ENCODE measurements at regions of chr11 and their contacts with region 1.

Region 1: GRCh38 chr11:75721855-75722668 is 4.4 kb downstream of the MOGAT2 start:
- DNase-seq: no peak
- H3K4me3 ChIP-seq: no peak overlapping the region
- H3K27ac ChIP-seq: peak overlapping the region in 1 of 59 donors; percentile 17
- H3K27me3 ChIP-seq: no peaks in the 10 kb centered on the region
- CTCF ChIP-seq: no peak

Region 2: GRCh38 chr11:75603791-75604736 is 118.0 kb before region 1 on chr11:
- intact Hi-C with region 1: no loop called
- DNase-seq: no peak
- H3K4me3 ChIP-seq: no peak overlapping the region
- H3K27ac ChIP-seq: no peak overlapping the region
- H3K27me3 ChIP-seq: no peaks in the 10 kb centered on the region
- CTCF ChIP-seq: no peak

Region 3: GRCh38 chr11:75826461-75827230 is 104.6 kb after region 1 on chr11:
- intact Hi-C with region 1: no loop called
- DNase-seq: no peak
- H3K4me3 ChIP-seq: no peak overlapping the region
- H3K27ac ChIP-seq: peak overlapping the region in 40 of 59 donors; percentile 2 to 72 (median 45)
- H3K27me3 ChIP-seq: no peaks in the 10 kb centered on the region
- CTCF ChIP-seq: no peak

Region 4: GRCh38 chr11:75878933-75879332 is 156.9 kb after region 1 on chr11:
- intact Hi-C with region 1: no loop called
- DNase-seq: no peak
- H3K4me3 ChIP-seq: peak overlapping the region in 45 of 59 donors; percentile 0 to 60 (median 29)
- H3K27ac ChIP-seq: peak overlapping the region; percentile 15 to 100 (median 84)
- H3K27me3 ChIP-seq: no peaks in the 10 kb centered on the region
- CTCF ChIP-seq: no peak

Region 5: DNA sequence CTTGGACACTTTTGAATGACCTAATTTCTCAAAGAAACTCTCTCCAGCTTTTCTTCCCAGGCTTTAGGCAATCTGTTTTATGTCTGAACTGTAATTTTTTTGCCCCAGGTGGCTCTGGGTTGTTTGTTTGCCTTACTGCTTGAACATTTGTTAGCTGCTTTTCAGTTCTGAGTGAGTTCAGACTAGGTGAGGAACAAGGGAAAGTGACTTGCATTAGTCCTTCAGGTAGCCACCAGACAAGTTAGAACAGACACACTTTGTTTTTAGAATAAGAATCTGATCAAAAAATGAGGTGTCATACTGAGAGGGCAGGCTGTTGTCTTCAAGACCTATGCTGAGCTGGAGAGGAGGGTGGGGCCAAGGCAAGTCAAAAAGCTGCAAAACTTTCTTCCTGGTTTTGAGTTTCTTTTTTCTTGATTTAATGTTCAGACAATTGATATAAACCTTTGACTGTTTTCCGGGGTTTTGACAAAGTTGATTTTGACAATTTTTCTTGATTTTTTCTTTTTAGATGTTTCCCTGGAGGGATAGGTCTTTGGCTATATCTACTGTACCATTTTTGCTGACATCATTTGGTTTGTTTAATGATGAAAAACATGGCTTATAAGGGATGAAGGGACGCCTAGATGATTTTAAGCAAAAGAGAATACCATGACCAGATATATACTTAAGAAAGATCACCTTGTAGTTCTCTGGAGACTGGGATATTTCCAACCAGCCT is 301.4 kb after region 1 on chr11:
- intact Hi-C with region 1: no loop called
- DNase-seq: no peak
- H3K4me3 ChIP-seq: no peak overlapping the region
- H3K27ac ChIP-seq: peak overlapping the region in 1 of 59 donors; percentile 1
- H3K27me3 ChIP-seq: no peaks in the 10 kb centered on the region
- CTCF ChIP-seq: no peak

Region 6: GRCh38 chr11:76159983-76160661 is 438.1 kb after region 1 on chr11:
- intact Hi-C with region 1: loop called in 1 of 2 experiments (anchors 5 kb)
- DNase-seq: peak in 1 of 10 donors; percentile 16
- H3K4me3 ChIP-seq: no peak overlapping the region
- H3K27ac ChIP-seq: no peak overlapping the region
- H3K27me3 ChIP-seq: peaks cover 0 to 2% (median 0%) of the 10 kb centered on the region in 45 donors
- CTCF ChIP-seq: no peak